Aorta (tissue), 5 donors: ENCODE measurements at regions of chr19 and their contacts with region 1.

Region 1: DNA sequence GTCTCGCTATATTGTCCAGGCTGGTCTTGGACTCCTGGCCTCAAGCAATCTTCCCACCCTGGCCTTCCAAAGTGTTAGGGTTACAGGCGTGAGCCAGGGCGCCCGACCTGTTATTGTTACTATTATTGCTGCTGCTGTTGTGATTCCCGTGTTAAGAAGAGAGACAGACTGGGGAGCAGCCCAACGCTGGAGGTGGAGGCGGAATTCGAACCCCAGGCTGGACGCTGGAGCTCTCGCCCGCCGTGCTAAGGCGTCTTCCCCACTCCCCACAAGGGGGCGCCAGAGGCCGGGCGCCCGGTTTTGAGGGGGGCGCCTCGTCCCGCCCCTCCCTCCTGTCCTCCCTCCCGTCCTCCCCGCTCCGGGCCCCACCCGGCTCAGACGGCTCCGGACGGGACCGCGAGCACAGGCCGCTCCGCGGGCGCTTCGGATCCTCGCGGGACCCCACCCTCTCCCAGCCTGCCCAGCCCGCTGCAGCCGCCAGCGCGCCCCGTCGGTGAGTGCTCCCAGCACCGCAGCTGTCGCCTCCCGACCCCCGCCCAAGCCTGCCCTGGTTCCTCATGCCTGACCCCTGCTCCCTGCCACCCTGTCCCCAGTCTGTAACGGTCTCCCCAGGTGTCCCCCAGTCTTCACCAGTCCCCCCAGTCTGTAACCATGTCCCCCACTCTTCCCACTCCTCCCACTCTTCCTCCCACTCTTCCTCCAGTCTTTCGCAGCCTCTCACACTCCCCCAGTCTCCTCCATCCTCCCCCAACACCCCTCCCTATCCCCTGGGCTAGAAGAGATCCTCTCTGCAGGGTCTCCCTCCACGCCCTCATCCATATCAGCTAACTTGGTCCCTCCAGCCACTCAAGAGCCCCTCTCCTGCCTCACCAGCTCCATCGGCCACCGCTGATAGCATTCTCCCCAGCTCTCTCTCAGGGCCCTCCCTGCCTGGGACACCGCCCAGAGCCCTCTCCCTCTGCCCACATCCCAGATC is at the start of gene EHD2:
- DNase-seq: peak; percentile 82 to 93
- ATAC-seq: peak; percentile 97
- H3K4me3 ChIP-seq: peak within 1 kb of the TSS; percentile 81 to 84
- H3K27ac ChIP-seq: peak within 1 kb of the TSS; percentile 4 to 65
- H3K4me1 ChIP-seq: no peaks in the 10 kb centered on the region
- H3K27me3 ChIP-seq: no peaks in the 10 kb centered on the region
- total RNA-seq, gene EHD2: 170 to 189 TPM

Region 2: GRCh38 chr19:47745010-47745901 is 31.9 kb after region 1 on chr19 and contains the start of gene NOP53:
- intact Hi-C with region 1: loop called (anchors 1 to 2 kb)
- DNase-seq: peak; percentile 97 to 98
- ATAC-seq: peak; percentile 83
- H3K4me3 ChIP-seq: peak within 1 kb of the TSS; percentile 66 to 84
- H3K27ac ChIP-seq: peak within 1 kb of the TSS in 1 of 2 donors; percentile 39
- H3K4me1 ChIP-seq: no peaks in the 10 kb centered on the region
- H3K27me3 ChIP-seq: no peaks in the 10 kb centered on the region
- total RNA-seq, gene NOP53: 214 to 319 TPM

Region 3: GRCh38 chr19:47779524-47780214 is 66.3 kb after region 1 on chr19:
- intact Hi-C with region 1: loop called in 1 of 2 experiments (anchors 10 kb)
- DNase-seq: peak; percentile 77 to 89
- ATAC-seq: peak; percentile 46
- H3K4me3 ChIP-seq: peak overlapping the region; percentile 71 to 95
- H3K27ac ChIP-seq: peak overlapping the region in 1 of 2 donors; percentile 41
- H3K4me1 ChIP-seq: peaks cover 0 to 2% of the 10 kb centered on the region in 2 donors
- H3K27me3 ChIP-seq: peaks cover 0 to 1% of the 10 kb centered on the region in 2 donors

Region 4: DNA sequence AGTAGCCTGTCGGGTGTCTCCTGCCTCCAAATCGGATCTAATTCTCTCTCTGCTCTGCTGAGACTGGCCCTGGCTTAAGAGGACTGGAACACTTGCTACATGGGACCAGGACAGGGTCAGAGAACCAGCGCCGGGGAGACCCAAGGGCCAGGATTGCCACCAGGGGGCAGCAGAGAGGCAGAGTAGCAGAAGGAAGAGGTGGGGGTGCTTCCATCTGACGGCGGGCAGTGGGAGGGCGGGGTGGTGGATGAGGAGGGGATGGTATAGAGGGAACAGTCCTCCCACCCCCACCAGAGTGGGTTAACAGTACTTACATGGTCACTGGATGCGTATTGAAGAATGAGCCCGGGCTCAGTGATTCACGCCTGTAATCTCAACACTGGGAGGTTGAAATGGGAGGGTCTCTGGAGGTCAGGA is 77.1 kb after region 1 on chr19:
- intact Hi-C with region 1: loop called (anchors 2 to 10 kb)
- DNase-seq: peak; percentile 85 to 97
- ATAC-seq: peak; percentile 84
- H3K4me3 ChIP-seq: no peak overlapping the region
- H3K27ac ChIP-seq: no peak overlapping the region
- H3K4me1 ChIP-seq: peaks cover 0 to 3% of the 10 kb centered on the region in 2 donors
- H3K27me3 ChIP-seq: no peaks in the 10 kb centered on the region

Region 5: DNA sequence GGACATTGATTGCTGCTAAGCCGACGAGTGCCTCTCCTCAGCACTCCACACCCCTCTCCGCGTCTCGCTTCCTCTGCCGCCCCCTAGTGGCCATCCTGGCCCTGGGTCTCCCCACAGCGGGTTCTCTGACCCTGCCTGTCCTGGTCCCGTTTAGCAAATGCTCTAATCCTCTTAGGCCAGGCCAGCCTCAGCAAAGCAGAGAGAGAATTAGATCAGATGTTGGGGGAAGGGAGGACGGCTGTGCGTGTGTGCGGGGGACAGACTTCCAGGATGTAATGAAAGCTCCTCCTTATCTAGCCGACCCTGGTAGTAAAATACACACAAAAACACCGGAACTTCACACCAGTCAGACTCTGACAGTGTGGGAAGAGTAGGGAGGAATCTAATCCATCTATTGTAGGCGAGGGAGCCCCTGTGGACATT is 150.2 kb after region 1 on chr19:
- intact Hi-C with region 1: no loop called
- DNase-seq: peak; percentile 87 to 97
- ATAC-seq: peak; percentile 87
- H3K4me3 ChIP-seq: no peak overlapping the region
- H3K27ac ChIP-seq: no peak overlapping the region
- H3K4me1 ChIP-seq: no peaks in the 10 kb centered on the region
- H3K27me3 ChIP-seq: no peaks in the 10 kb centered on the region